Breast epithelium (tissue), 4 donors: ENCODE measurements at regions of chr2 and their contacts with region 1.

Region 1: DNA sequence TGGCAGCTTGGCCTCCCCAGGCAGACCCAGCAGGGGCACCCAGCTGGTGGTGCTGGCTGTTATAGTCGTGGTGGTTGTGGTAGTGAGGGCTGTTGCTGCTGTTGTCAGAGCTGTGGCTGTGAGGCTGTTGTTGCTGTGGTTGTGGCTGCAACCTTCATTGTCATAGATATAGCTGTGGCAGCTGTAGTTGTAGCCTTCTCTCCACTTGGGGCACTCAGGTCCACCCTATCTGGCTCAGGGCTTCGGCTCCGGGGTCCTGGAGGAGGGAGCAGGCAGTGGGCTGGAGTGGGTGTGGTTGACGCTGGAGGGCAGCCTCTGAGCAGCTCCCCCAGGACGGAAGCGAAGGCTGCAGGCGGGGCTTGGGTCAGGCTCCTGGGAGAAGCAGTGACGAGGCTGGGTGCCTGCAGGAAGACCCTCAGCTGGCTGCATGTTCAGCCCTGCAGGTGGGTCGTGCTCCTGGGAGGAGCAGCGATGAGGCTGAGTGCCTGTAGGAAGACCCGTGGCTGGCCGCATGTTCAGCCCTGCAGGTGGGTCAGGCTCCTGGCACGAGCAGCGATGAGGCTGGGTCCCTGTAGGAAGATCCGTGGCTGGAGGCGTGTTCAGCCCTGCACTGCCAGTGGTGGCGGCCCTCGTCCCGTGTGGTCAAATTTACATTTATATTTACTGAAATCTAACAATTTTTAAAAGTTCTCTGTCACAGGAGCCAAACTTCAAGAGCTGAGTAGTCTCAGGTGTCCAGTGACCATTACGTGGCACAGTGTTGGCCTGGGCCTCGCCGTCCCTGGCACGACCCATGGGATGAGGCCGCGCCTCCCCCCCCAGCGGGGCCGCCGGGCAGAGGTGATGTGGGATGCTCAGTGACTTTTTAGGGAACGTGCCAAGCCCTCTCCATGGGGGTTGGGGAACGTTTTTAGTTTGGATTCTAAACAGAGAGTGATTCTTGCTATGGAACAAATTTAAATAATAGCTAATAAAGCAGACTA is 79.2 kb upstream of the PXDN start:
- DNase-seq: no peak
- H3K4me3 ChIP-seq: no peak overlapping the region
- H3K27ac ChIP-seq: peak overlapping the region in 1 of 2 donors; percentile 12
- H3K4me1 ChIP-seq: no peaks in the 10 kb centered on the region
- H3K27me3 ChIP-seq: peaks cover 0 to 3% of the 10 kb centered on the region in 2 donors
- CTCF ChIP-seq: no peak
- POLR2A ChIP-seq: no peak

Region 2: GRCh38 chr2:1091895-1092585 is 731.4 kb before region 1 on chr2:
- intact Hi-C with region 1: no loop called
- DNase-seq: no peak
- H3K4me3 ChIP-seq: no peak overlapping the region
- H3K27ac ChIP-seq: no peak overlapping the region
- H3K4me1 ChIP-seq: no peaks in the 10 kb centered on the region
- H3K27me3 ChIP-seq: no peaks in the 10 kb centered on the region
- CTCF ChIP-seq: no peak
- POLR2A ChIP-seq: no peak

Region 3: DNA sequence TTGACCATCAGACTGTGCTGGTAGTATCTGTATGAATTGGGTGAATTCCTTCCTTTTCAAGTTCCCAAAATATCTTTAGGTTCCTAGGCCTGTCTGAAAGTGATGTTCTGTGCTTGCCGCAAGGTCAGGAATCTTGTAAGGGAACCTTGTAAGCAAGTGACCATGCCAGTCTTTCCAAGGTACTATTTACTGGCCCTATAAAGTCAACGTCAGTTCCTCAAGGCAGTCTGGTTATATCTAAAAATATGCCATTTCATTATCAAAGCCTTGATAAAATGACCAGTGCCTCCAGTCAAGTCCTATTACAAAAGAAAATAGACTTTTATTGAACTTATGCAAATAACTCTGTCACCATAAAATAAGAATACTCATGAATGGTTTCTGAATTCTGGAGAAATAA is 498.6 kb before region 1 on chr2:
- intact Hi-C with region 1: loop called (anchors 5 kb)
- DNase-seq: no peak
- H3K4me3 ChIP-seq: no peak overlapping the region
- H3K27ac ChIP-seq: no peak overlapping the region
- H3K4me1 ChIP-seq: no peaks in the 10 kb centered on the region
- H3K27me3 ChIP-seq: no peaks in the 10 kb centered on the region
- CTCF ChIP-seq: no peak
- POLR2A ChIP-seq: no peak

Region 4: DNA sequence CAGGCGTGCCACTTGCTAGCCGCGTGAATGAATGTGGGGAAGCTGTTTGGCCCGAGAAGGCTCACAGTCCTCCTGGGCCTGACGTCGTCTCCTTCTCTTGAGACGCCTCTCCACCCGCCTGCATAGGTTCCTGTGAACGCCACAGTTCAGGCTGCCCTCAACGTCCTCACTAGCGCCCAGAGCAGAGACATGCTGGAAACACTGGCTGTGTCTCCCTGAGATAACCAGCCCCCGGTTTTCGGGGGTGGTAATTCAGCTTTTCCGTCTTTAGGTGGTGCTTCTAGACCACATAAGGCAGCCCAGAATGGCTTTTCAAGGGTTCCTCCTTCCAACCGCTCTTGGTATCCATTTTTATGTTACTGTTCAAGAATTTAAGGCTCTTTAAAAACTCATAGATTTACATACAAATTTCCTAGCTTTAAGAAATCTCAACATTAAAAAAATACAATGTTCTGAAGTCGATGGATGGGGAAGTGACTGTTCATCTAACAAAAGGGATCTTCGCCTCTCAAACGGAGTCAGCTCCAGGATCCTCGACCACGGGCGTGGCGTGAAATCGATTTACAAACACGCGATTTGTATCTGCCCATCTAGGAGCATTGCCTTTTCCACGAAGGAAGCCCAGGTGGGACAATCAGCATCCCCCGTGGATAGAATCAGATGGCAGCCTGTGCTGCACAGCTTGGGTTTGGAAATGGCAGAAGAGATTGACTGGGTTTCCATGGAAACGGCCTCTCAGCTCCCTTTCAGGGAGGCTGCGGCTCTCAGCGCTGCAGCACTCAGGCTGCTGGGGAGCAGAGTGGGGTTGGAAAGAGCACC is 31.5 kb after region 1 on chr2:
- intact Hi-C with region 1: no loop called
- DNase-seq: no peak
- H3K4me3 ChIP-seq: no peak overlapping the region
- H3K27ac ChIP-seq: no peak overlapping the region
- H3K4me1 ChIP-seq: no peaks in the 10 kb centered on the region
- H3K27me3 ChIP-seq: peaks cover 0 to 50% of the 10 kb centered on the region in 2 donors
- CTCF ChIP-seq: no peak
- POLR2A ChIP-seq: no peak

Region 5: GRCh38 chr2:2318949-2319348 is 495.5 kb after region 1 on chr2:
- intact Hi-C with region 1: no loop called
- DNase-seq: no peak
- H3K4me3 ChIP-seq: no peak overlapping the region
- H3K27ac ChIP-seq: no peak overlapping the region
- H3K4me1 ChIP-seq: no peaks in the 10 kb centered on the region
- H3K27me3 ChIP-seq: no peaks in the 10 kb centered on the region
- CTCF ChIP-seq: no peak
- POLR2A ChIP-seq: no peak